Dorsolateral prefrontal cortex (tissue), 120 donors: ENCODE measurements at regions of chr3 and their contacts with region 1.

Region 1: DNA sequence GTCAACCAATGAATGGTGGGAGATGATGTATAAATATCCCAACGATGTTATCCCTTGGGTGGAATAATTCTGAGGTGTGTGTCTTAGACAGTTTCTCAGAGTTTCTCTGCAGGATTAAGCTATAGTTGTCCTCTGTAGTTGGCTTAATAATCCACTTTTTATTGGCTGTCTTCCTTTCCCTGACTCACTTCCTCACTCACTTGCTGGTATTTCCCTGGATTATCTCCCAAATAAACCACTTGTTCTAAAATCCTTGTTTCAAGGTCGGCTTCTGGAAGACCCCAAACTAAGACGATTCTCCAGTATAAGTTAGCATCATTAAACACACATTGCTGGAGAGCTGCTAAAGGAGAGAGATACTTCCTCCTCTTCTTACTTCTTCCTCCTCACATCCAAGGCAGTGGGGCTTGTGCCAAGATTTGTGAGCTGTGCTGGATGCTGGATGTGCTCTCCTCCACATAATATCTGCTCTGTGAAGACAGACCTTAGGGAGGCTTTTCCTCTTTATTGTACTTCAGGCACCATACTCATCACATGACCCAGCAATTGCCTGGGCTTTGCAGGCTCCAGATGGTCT is 22.5 kb upstream of the ROPN1 start:
- DNase-seq: peak in 5 of 10 donors; percentile 34 to 65 (median 47)
- H3K4me3 ChIP-seq: no peak overlapping the region
- H3K27ac ChIP-seq: peak overlapping the region in 2 of 59 donors; percentile 9 to 47
- H3K27me3 ChIP-seq: no peaks in the 10 kb centered on the region
- CTCF ChIP-seq: no peak

Region 2: DNA sequence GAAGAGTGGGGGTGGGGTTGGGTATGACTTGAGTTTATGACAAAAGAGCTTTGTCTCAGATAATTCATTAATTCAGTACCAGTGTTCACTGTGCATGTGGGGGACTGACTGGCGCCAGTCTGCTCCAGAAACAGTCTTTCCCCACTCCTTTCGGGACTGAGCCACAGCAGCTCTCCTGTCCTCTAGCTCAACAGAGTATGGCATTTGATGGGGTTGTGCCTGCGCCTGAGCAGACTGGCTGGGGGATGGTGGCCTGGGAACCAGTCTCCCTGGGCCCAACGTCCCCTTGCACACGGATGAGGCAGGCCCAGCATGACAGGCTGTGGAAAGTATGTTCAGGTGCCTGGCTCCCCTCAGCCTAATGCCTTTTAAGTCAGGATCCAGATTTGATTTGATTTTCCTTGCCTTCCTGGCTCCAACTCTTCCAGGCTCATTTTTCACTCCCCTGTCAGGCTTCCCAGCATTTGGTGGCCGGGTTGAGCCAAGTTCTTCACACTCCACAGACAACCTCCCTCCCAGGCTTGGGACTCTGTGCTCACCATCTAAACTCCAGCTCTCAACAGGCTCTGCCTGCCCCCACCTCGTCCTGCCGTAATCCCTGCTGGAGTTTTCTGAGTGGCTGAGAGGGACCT is 235.3 kb before region 1 on chr3:
- intact Hi-C with region 1: no loop called
- DNase-seq: peak in 2 of 10 donors; percentile 46 to 54
- H3K4me3 ChIP-seq: peak overlapping the region in 1 of 59 donors; percentile 16
- H3K27ac ChIP-seq: peak overlapping the region in 15 of 59 donors; percentile 5 to 70 (median 43)
- H3K27me3 ChIP-seq: no peaks in the 10 kb centered on the region
- CTCF ChIP-seq: no peak

Region 3: GRCh38 chr3:123884203-123884831 is 130.1 kb before region 1 on chr3 and contains the start of gene MYLK:
- intact Hi-C with region 1: no loop called
- DNase-seq: peak in 1 of 10 donors; percentile 11
- H3K4me3 ChIP-seq: peak within 1 kb of the TSS; percentile 18 to 69 (median 51)
- H3K27ac ChIP-seq: no peak within 1 kb of the TSS
- H3K27me3 ChIP-seq: peaks cover 0 to 6% (median 0%) of the 10 kb centered on the region in 45 donors
- CTCF ChIP-seq: no peak
- total RNA-seq, gene MYLK: 27.6 to 135 (median 66.4) TPM

Region 4: DNA sequence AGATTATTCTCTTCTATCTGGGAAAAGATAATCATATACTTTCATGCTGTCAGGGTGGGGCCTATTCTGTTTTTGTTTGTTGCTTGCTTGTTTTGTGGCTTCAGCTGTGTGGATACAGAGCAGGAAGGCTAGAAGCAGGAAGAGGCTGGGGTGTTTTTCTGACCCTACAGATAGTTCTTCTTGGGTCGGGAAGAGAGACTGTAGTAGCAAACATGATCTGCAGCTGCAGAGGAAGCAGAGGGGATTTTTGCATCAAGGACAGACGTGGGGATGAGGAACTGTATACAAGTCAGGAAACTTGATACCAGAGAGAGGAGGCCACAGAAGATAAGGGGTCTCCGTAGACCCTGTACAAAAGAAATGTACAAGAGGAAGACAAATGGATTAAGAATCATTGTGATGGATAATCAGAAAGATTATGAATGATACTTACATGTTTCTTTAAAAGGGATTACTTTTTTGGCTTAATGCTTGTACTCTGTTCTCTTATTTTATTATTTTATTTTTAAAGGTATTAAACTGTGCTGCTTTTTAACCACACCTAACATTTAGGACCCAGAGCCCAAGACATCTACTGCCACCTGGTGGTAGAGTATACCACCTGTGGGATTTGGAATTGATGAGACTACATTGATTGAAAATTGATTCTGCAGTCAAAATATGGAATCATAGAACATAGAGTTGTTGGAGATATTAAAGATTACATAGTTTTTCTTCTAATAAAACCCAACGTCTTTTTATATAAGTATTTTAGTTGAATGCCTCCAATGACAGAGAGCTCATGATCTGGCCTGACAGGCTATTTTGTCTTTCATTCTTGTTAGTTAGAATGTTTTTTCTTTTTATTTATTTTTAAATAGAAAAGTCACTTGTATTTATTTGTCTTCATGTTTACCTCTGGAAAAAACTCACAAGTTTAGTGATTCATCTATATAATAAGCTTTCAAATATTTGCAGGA is 64.8 kb after region 1 on chr3:
- intact Hi-C with region 1: loop called (anchors 2 to 5 kb)
- DNase-seq: peak in 1 of 10 donors; percentile 29
- H3K4me3 ChIP-seq: no peak overlapping the region
- H3K27ac ChIP-seq: no peak overlapping the region
- H3K27me3 ChIP-seq: no peaks in the 10 kb centered on the region
- CTCF ChIP-seq: peak; percentile 75 to 95 (median 88)

Region 5: DNA sequence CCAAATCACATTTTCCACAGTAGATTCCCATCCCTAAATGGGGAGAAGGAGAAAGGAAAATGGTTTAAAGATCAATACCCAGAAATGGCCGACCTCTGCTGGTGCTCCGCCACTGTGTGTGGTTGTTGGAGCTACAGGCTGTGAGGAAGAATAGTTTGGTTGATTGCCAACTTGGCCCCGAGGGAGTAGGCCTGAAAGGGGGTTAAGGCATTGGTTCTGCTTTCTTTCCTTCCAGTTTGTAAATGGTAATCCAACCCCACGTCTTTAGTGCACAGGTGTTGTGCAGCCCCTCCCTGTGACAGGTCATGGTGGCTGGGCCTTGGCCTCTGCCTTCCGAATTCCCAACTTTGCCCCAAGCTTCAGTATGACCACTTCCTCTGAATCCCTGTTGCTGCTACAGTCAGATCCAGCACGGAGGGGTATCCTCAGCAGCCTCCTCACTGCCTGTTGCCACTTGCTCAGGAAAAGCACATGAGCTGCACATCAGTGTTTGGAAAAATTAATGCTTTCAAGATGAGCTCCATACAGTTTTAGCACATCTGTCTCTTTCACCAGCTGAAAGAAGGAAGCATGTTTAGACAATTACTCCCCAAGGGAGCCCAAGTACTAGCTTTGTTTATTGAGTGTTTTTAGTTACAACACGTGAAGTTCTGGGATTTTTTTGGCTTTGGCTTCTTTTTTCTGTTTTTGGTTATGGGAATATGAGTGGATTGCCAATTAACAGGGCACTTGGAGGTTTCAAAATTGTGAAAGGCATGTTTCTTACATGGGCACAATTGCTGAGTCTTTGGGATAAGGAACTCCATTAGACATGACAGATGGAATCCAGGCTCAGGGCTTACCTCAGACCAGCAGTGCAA is 69.8 kb after region 1 on chr3:
- intact Hi-C with region 1: loop called (anchors 2 to 5 kb)
- DNase-seq: no peak
- H3K4me3 ChIP-seq: no peak overlapping the region
- H3K27ac ChIP-seq: peak overlapping the region in 9 of 59 donors; percentile 2 to 40 (median 26)
- H3K27me3 ChIP-seq: no peaks in the 10 kb centered on the region
- CTCF ChIP-seq: no peak

Region 6: GRCh38 chr3:124281453-124282316 is 267.2 kb after region 1 on chr3:
- intact Hi-C with region 1: loop called in 1 of 2 experiments (anchors 5 kb)
- DNase-seq: peak in 1 of 10 donors; percentile 49
- H3K4me3 ChIP-seq: no peak overlapping the region
- H3K27ac ChIP-seq: peak overlapping the region in 3 of 59 donors; percentile 20 to 32 (median 21)
- H3K27me3 ChIP-seq: no peaks in the 10 kb centered on the region
- CTCF ChIP-seq: peak in 54 of 56 donors; percentile 26 to 71 (median 54)

Region 7: DNA sequence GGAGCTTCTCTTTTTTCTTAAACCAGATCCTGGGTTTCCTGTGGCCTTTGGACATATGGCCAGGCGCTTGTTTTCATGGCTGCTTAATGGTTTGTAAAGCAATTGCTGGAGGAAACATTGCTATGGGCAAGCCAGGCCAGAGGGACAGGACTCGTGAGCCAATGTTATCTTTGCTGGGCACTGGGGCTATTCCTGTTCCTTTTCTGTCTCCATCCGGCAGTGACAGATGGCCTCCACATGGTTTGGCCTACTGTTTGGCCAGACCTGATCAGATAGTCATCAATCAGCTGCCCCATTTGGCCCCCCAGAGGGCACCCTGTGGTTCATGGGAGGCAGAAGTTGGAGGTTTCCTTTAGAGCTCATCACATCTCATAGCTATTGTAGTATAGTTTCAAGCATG is 303.6 kb after region 1 on chr3:
- intact Hi-C with region 1: no loop called
- DNase-seq: peak in 1 of 10 donors; percentile 84
- H3K4me3 ChIP-seq: no peak overlapping the region
- H3K27ac ChIP-seq: no peak overlapping the region
- H3K27me3 ChIP-seq: no peaks in the 10 kb centered on the region
- CTCF ChIP-seq: no peak

Region 8: DNA sequence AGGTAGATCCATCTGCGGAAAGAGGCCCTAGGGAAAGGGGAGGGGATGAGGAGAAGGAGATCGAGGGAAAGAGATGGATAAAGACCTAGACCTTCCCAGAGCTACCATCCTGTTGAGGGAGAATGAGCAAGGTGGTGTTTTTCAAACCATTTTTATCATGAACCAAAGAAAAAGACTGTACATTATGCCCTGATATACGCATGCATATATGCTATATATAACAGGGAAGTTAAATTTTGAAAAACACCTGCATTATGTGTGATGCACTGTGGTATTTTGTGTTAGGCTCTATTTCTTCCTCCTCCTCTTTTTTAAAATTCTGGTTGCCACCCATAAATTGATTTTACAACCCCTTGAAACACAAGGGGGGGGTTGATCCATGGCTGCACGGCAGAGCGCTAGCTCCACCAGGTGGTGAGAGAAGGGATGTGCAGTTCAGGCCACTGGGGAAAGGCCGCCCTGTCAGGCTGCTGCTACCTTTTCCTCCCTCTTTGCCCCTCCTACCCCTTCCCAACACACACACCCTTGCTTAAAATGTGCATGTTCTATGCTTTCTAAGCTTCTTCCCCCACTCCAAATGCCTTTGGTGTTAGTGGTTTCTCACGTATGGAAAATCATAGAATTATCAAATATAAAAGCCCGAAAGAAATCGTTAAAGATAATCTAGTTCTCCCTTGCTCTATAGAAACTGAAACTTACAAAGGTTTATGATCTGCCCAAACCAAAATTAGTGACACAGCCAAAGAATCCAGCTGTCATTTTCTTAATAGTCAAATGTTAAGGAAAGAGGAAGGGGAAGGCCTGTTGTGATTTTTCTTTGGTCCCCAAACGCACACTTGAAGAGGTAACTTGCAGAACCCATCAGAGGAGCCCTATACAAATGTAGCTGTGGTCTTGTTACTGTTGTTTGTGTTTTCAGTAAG is 453.8 kb after region 1 on chr3:
- intact Hi-C with region 1: loop called in 1 of 2 experiments (anchors 5 kb)
- DNase-seq: peak in 9 of 10 donors; percentile 26 to 70 (median 46)
- H3K4me3 ChIP-seq: no peak overlapping the region
- H3K27ac ChIP-seq: peak overlapping the region in 35 of 59 donors; percentile 6 to 76 (median 51)
- H3K27me3 ChIP-seq: no peaks in the 10 kb centered on the region
- CTCF ChIP-seq: peak; percentile 70 to 98 (median 92)

Region 9: GRCh38 chr3:124559881-124560574 is 545.6 kb after region 1 on chr3:
- intact Hi-C with region 1: loop called in 1 of 2 experiments (anchors 10 kb)
- DNase-seq: peak; percentile 53 to 90 (median 79)
- H3K4me3 ChIP-seq: no peak overlapping the region
- H3K27ac ChIP-seq: peak overlapping the region in 51 of 59 donors; percentile 1 to 92 (median 70)
- H3K27me3 ChIP-seq: no peaks in the 10 kb centered on the region
- CTCF ChIP-seq: peak; percentile 38 to 97 (median 90)